PC-9 (cell line): ENCODE measurements at regions of chr17 and their contacts with region 1.

Region 1: GRCh38 chr17:15260376-15261257 is 4.5 kb downstream of the PMP22 start:
- DNase-seq: peak in 1 of 2 experiments; percentile 83
- H3K4me3 ChIP-seq: peak overlapping the region; percentile 48; the same call in 1 of the 2 replicates
- H3K27ac ChIP-seq: no peak overlapping the region
- H3K4me1 ChIP-seq: no peaks in the 10 kb centered on the region
- H3K27me3 ChIP-seq: 0 out of 2 replicates have a peak, but pooled peaks cover 8% of the 10 kb centered on the region
- CTCF ChIP-seq: no peak

Region 2: GRCh38 chr17:15278924-15279477 is 18.4 kb after region 1 on chr17:
- CTCF ChIA-PET with region 1: no interaction called
- POLR2A ChIA-PET with region 1: no interaction called
- intact Hi-C with region 1: no loop called
- DNase-seq: peak in 1 of 2 experiments; percentile 37
- H3K4me3 ChIP-seq: no peak overlapping the region
- H3K27ac ChIP-seq: no peak overlapping the region
- H3K4me1 ChIP-seq: no peaks in the 10 kb centered on the region
- H3K27me3 ChIP-seq: no peaks in the 10 kb centered on the region
- CTCF ChIP-seq: no peak

Region 3: DNA sequence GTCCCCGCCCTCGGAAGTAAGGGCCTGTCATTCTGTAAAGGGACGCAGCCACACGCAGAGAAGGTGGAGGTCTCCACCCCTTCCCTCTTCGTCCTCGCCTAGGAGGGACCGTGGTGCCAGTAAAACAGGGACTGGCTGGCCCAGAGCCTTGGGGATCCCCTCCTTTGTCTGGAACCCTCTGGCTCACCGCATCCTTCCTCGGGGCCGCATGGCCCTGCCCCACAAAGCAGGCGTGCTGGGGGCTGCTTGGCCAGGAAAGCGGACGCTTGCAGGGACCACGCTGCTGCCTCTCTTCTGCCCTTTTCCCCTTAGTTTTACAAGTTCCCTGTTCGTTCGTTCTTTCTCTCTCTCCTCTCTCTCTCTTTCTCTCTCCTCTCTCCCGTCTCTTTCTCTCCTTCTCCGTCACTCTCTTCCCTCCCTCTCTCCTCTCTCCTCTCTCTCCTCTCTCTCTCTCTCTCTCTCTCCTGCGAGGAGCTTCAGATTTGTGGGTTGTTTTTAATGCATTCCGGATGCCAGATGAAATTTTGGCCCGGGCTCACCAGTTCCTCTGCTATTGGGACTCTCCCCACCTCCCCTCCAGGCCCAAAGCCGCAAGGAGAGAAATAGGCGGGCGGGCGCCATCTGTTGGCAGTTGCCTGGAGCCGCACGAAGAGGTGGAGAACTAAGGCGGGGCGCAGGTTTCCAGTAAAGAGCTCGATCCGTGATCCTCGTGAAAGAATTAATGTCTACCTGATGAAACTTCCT is 241.9 kb after region 1 on chr17:
- CTCF ChIA-PET with region 1: interaction called, 7 read pairs
- POLR2A ChIA-PET with region 1: no interaction called
- intact Hi-C with region 1: loop called (anchors 1 kb)
- DNase-seq: peak in 1 of 2 experiments; percentile 53
- H3K4me3 ChIP-seq: no peak overlapping the region
- H3K27ac ChIP-seq: no peak overlapping the region
- H3K4me1 ChIP-seq: no peaks in the 10 kb centered on the region
- H3K27me3 ChIP-seq: no peaks in the 10 kb centered on the region
- CTCF ChIP-seq: peak; percentile 52; the same call in 1 of the 2 replicates

Region 4: DNA sequence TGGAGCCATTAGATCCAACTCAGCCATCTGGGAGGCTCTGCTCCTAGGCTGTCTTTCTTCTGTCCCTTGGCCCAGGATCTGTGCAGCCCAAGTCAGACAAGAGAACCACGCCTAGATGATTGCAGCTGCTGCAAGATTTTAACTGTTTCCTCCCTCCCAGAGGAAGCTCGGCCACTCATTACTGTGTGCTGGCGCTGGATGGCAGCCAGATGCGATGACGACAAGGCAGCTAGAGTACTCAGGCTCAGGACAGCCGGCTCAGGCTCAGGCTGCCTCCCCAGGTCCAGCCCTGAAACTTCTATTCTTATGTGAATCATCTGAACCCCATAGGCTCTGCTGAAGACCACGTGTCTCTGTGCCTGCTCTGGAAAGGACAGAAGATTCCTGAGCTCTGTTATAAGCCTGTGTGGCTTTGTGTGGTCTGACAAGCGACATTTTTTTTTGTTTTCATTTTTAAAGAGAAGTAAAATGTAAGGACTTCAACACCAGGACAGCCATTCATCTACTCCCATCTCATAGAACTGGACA is 391.0 kb after region 1 on chr17:
- CTCF ChIA-PET with region 1: no interaction called
- POLR2A ChIA-PET with region 1: interaction called, 3 read pairs
- intact Hi-C with region 1: loop called (anchors 10 kb)
- DNase-seq: peak; percentile 96 to 97
- H3K4me3 ChIP-seq: peak overlapping the region; percentile 88
- H3K27ac ChIP-seq: peak overlapping the region; percentile 97
- H3K4me1 ChIP-seq: peaks cover 41% of the 10 kb centered on the region
- H3K27me3 ChIP-seq: no peaks in the 10 kb centered on the region
- CTCF ChIP-seq: no peak